ENCODE measurements at regions of chr15 and their contacts with region 1.

Region 1: GRCh38 chr15:78108299-78109084 is 16.1 kb downstream of the SH2D7 start:
- DNase-seq: peak; percentile 91
- H3K4me3 Mint-ChIP-seq: no peak overlapping the region
- H3K27ac Mint-ChIP-seq: peak overlapping the region; percentile 64
- H3K4me1 Mint-ChIP-seq: peaks cover 56% of the 10 kb centered on the region
- H3K27me3 Mint-ChIP-seq: no peaks in the 10 kb centered on the region

Region 2: GRCh38 chr15:77959432-77959879 is 149.0 kb before region 1 on chr15:
- CTCF ChIA-PET with region 1: interaction called, 41 read pairs
- POLR2A ChIA-PET with region 1: no interaction called
- DNase-seq: peak; percentile 75
- H3K4me3 Mint-ChIP-seq: peak overlapping the region; percentile 41
- H3K27ac Mint-ChIP-seq: no peak overlapping the region
- H3K4me1 Mint-ChIP-seq: peaks cover 18% of the 10 kb centered on the region
- H3K27me3 Mint-ChIP-seq: peaks cover 25% of the 10 kb centered on the region

Region 3: DNA sequence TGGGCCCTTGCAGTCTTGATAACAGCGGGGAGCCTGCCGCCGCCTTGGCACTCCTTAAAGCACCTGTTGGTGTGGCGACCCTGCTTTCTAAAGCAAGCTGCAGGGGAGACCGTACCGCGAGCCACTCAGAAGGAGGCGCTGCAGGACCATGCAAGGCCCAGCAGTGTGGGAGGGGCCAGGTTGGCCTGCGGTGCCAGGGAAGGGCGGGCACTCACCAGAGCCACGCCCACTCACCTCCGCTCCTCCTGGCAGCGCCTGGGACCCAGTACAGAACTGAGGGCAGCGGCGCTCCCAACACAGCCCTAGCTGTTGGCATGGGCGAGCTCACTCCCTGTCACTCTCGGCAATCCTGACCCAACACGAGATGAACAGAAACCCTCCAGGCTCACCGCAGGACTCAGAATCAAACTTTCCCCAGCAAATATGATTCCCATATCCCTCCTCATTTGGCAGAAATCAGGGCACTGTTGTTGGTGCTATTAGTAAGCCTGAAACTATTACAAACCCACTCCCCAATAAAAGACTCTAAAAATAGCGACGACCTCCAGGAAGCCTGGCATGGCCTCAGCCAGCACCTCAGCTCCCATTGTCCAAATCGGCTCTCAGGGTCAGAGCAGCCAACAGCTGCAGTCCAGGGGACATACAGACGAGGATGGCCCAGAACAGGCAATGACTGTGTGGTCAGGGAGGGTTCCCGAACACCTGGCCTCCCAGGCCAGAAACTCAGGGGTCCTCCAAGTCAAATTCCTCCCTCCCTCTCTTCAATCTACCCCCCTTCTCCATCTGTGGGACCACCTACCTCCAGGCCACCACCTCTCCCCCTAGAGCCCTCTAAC is 108.2 kb before region 1 on chr15:
- CTCF ChIA-PET with region 1: interaction called, 27 read pairs
- POLR2A ChIA-PET with region 1: no interaction called
- DNase-seq: peak; percentile 86
- H3K4me3 Mint-ChIP-seq: no peak overlapping the region
- H3K27ac Mint-ChIP-seq: no peak overlapping the region
- H3K4me1 Mint-ChIP-seq: peaks cover 14% of the 10 kb centered on the region
- H3K27me3 Mint-ChIP-seq: no peaks in the 10 kb centered on the region

Region 4: GRCh38 chr15:78065284-78065872 is 43.1 kb before region 1 on chr15:
- CTCF ChIA-PET with region 1: interaction called, 15 read pairs
- POLR2A ChIA-PET with region 1: no interaction called
- DNase-seq: no peak
- H3K4me3 Mint-ChIP-seq: peak overlapping the region; percentile 45
- H3K27ac Mint-ChIP-seq: no peak overlapping the region
- H3K4me1 Mint-ChIP-seq: peaks cover 11% of the 10 kb centered on the region
- H3K27me3 Mint-ChIP-seq: no peaks in the 10 kb centered on the region

Region 5: GRCh38 chr15:78093242-78094020 is 15.1 kb before region 1 on chr15:
- CTCF ChIA-PET with region 1: interaction called, 14 read pairs
- POLR2A ChIA-PET with region 1: interaction called, 5 read pairs
- DNase-seq: no peak
- H3K4me3 Mint-ChIP-seq: no peak overlapping the region
- H3K27ac Mint-ChIP-seq: no peak overlapping the region
- H3K4me1 Mint-ChIP-seq: peaks cover 29% of the 10 kb centered on the region
- H3K27me3 Mint-ChIP-seq: peaks cover 3% of the 10 kb centered on the region

Region 6: GRCh38 chr15:78162038-78162437 is 53.5 kb after region 1 on chr15:
- CTCF ChIA-PET with region 1: no interaction called
- POLR2A ChIA-PET with region 1: no interaction called
- DNase-seq: peak; percentile 40
- H3K4me3 Mint-ChIP-seq: no peak overlapping the region
- H3K27ac Mint-ChIP-seq: peak overlapping the region; percentile 81
- H3K4me1 Mint-ChIP-seq: peaks cover 15% of the 10 kb centered on the region
- H3K27me3 Mint-ChIP-seq: no peaks in the 10 kb centered on the region

Region 7: DNA sequence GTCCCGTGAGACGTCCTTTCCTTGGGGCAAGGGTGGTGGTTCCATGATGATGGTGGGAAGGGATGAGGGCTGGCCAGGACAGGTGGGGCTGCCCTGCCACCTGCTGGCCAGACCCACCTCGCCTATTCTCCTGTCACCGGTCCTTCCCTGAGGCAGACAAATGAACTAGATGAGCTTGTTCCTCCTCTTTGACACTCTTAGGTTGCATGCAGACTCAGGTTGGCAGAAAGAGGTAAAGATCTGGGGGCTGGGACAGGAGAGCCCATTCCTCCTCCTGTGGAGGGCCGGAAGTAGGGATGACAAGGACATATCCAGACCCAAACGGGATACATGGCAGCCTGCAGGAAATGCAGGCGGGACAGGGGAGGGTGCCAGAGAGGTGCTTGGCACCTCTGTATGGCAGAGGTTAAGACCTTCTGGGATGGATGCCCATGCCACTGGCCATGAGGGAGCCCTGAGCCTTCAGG is 87.3 kb after region 1 on chr15:
- CTCF ChIA-PET with region 1: interaction called, 16 read pairs
- POLR2A ChIA-PET with region 1: no interaction called
- DNase-seq: peak; percentile 50
- H3K4me3 Mint-ChIP-seq: no peak overlapping the region
- H3K27ac Mint-ChIP-seq: no peak overlapping the region
- H3K4me1 Mint-ChIP-seq: no peaks in the 10 kb centered on the region
- H3K27me3 Mint-ChIP-seq: peaks cover 6% of the 10 kb centered on the region

Region 8: GRCh38 chr15:78368651-78369050 is 260.2 kb after region 1 on chr15:
- CTCF ChIA-PET with region 1: no interaction called
- POLR2A ChIA-PET with region 1: no interaction called
- DNase-seq: no peak
- H3K4me3 Mint-ChIP-seq: no peak overlapping the region
- H3K27ac Mint-ChIP-seq: no peak overlapping the region
- H3K4me1 Mint-ChIP-seq: peaks cover 5% of the 10 kb centered on the region
- H3K27me3 Mint-ChIP-seq: peaks cover 3% of the 10 kb centered on the region